ENCODE measurements at regions of chr16 and their contacts with region 1.

Region 1: GRCh38 chr16:71311553-71312158 is 22.5 kb upstream of the CMTR2 start:
- DNase-seq: no peak
- H3K4me3 ChIP-seq: no peak overlapping the region
- H3K27ac ChIP-seq: no peak overlapping the region
- H3K27me3 ChIP-seq: no peaks in the 10 kb centered on the region
- CTCF ChIP-seq: peak; percentile 75

Region 2: GRCh38 chr16:71282943-71283342 is 28.7 kb before region 1 on chr16:
- CTCF ChIA-PET with region 1: interaction called, 12 read pairs
- POLR2A ChIA-PET with region 1: no interaction called
- DNase-seq: no peak
- H3K4me3 ChIP-seq: no peak overlapping the region
- H3K27ac ChIP-seq: no peak overlapping the region
- H3K27me3 ChIP-seq: no peaks in the 10 kb centered on the region
- CTCF ChIP-seq: no peak

Region 3: DNA sequence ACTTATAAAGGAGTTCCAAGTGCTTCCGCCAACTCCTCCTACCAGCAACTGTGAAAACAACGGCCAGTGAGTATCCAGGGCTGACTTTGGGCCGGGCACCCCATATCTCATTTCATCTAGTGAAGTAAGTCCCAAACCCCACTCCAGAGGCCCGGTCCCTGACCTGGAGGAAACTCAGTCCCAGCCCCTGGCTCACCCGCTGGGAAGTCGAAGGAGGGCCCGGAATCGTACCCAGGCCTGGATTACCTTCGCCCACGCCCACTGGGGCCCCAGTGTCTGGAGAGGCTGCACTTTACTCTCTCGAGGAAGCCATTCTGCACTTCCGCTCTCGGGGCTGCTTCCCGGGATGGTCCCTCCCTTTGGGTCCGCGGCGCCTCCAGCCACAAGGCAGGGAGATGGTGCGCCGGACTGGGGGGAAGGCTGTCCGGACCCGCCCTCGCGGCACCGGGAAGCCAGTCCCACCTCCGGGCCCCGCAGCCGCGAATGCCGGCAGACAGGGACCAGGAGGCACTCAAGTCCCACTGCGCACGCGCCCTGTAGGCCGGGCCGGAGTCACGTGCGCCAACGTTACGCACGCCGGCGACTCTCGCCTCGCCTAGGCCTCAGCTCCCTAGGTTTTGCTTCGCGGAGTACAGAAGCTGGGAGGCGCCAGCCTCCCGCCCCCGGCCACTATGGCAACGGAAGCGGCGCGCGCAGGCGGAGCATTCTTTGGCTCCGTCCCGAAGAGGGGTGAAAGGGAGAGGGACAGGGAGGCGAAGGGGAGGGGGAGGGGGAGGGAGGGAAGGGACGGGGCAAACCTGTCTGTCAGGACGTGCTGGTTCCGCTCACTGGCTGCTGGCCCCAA is 22.5 kb before region 1 on chr16 and contains the start of gene CMTR2:
- CTCF ChIA-PET with region 1: interaction called, 12 read pairs
- POLR2A ChIA-PET with region 1: no interaction called
- DNase-seq: peak; percentile 96
- H3K4me3 ChIP-seq: peak within 1 kb of the TSS; percentile 80
- H3K27ac ChIP-seq: peak within 1 kb of the TSS; percentile 92
- H3K27me3 ChIP-seq: peaks cover 4% of the 10 kb centered on the region
- CTCF ChIP-seq: no peak
- polyA plus RNA-seq, gene CMTR2: 21.8 and 32.7 TPM in 2 replicates